Common myeloid progenitor, CD34-positive (primary cell): ENCODE measurements at regions of chr2 and their contacts with region 1.

Region 1: DNA sequence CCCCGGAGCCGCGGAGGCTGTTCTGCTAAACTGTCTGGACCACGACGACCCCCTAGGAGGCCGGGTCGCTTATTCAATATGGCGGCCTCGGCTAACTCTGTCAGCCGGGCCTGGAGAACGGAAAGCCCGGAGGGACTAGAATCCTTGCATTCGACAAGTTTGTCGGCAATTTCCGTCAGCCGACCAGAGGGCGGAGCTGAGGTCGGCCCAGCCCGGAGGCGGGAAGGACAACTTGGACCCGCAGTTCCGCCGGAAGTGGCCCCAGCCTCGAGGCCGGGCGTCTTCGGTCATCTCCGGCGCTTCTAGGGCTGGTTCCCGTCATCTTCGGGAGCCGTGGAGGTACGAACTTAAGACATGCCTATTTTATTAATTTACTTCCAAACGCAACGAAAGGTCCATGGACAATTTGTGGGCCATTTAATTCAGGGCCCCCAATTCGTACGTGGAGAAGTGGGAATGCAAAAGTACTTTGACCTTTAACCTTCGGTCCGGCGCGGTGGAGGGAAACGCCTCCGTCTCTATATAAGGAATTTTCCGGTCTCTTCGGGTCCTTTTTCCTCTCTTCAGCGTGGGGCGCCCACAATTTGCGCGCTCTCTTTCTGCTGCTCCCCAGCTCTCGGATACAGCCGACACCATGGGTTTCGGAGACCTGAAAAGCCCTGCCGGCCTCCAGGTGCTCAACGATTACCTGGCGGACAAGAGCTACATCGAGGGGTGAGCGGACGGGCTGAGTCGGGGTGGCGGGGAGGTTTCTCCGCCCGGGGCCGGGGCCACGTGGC is at the starts of genes EEF1B2 and NDUFS1:
- DNase-seq: peak; percentile 98 to 99 (median 99)
- H3K4me3 ChIP-seq: peak within 1 kb of the TSS; percentile 73 to 98 (median 93)
- H3K27ac ChIP-seq: peak within 1 kb of the TSS; percentile 86 to 97
- H3K4me1 ChIP-seq: peaks cover 10 to 31% (median 19%) of the 10 kb centered on the region in 4 experiments
- H3K27me3 ChIP-seq: no peaks in the 10 kb centered on the region

Region 2: DNA sequence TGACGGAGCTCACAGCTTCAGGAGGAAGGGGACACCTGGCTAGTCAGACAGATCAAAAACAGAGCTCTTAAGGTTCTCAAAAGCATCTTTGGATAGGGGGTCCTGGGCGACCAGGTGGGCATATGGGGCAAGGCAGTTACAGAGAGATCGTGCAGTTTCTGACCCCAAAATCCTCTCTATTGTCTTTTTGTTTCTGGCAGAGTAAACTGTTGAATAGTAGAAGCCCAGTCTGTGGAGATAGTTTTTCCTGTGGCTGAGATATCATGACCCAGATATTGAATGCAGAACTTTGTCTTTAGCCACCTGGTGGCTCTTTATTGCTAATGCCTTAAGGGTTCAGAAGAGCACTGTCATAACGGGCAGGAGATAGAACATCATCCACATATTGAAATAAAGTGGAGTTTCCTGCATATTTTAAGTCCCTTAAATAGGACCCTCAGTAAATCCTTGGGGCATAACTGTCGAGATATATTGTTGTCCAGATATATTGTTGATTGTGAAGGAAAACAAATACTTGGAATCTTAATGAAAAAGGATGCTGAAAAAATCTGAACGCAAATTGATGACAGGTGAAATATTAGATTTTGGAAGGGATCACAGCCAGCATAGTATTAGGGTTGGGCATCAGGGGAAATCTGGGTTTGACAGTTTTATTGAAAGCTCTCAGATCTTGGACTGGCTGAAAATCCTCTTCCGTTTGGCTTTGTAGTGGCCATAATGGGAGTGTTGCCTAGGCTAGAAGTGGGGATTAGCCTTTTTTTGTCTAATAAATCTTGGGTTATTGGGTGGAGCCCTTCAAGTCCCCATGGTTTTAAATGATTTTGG is 100.9 kb after region 1 on chr2:
- CTCF ChIA-PET with region 1: interaction called, 10 read pairs
- POLR2A ChIA-PET with region 1: interaction called, 3 read pairs
- DNase-seq: peak in 2 of 3 donors; percentile 66 to 68
- H3K4me3 ChIP-seq: no peak overlapping the region
- H3K27ac ChIP-seq: no peak overlapping the region
- H3K4me1 ChIP-seq: peaks cover 0 to 9% (median 3%) of the 10 kb centered on the region in 4 experiments
- H3K27me3 ChIP-seq: peaks cover 21 to 97% (median 67%) of the 10 kb centered on the region in 5 experiments

Region 3: DNA sequence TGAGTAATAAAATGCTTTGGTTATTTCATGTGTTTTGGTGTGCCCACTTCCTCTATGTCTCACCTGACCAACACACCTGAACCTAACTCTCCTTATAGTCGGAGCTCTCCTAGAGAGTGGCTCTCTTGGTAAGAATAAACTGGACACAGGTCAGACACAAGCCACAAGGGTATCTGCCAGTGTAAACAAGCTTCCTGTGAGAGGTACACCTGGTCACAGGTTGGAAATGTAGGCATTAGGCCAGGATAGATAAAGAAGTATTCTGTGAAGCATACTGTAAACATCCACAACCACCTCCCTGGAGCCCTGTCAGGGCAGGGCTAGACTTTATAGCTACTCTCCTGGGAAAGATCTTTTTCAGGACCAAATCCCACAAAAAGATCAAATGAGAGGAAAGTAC is 184.3 kb after region 1 on chr2:
- CTCF ChIA-PET with region 1: no interaction called
- POLR2A ChIA-PET with region 1: no interaction called
- DNase-seq: no peak
- H3K4me3 ChIP-seq: no peak overlapping the region
- H3K27ac ChIP-seq: no peak overlapping the region
- H3K4me1 ChIP-seq: no peaks in the 10 kb centered on the region
- H3K27me3 ChIP-seq: no peaks in the 10 kb centered on the region